HEK293 (cell line): ENCODE measurements at regions of chr2 and their contacts with region 1.

Region 1: DNA sequence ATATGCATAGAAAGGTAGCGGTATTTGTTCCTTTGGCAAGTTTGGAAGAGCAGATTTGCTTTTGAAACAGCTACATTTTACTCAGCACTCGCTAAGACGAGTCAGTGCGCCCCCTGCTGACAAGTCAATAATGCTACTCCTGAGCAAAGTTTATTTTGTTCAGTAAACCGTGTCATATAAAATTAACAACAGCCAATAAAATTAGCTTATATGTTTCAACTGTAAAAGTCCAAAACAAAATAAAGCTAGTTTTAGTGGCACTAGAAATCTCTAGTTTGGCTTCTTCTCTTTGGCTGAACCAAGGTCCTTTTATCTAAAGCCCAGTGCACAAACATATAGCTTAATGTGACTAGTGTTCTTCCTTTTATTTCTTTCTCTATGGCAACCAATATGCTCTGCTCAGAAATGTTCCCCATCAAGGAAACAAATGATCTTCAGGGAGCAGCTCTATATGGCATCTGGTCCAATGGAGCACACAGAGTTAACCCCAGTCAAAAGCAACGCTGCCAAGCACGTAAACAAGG is 4.2 kb upstream of the POU3F3 start:
- H3K4me3 ChIP-seq: no peak overlapping the region
- H3K27ac ChIP-seq: peak overlapping the region; percentile 99
- H3K4me1 ChIP-seq: peaks cover 38% of the 10 kb centered on the region
- CTCF ChIP-seq: peak; percentile 60; the same call in 1 of the 2 replicates

Region 2: GRCh38 chr2:104834431-104835153 is 15.1 kb before region 1 on chr2:
- CTCF ChIA-PET with region 1: interaction called, 22 read pairs
- POLR2A ChIA-PET with region 1: interaction called, 4 read pairs
- H3K4me3 ChIP-seq: no peak overlapping the region
- H3K27ac ChIP-seq: no peak overlapping the region
- H3K4me1 ChIP-seq: peaks cover 6% of the 10 kb centered on the region
- CTCF ChIP-seq: no peak

Region 3: GRCh38 chr2:104862058-104862941 is 12.6 kb after region 1 on chr2:
- CTCF ChIA-PET with region 1: interaction called, 15 read pairs
- POLR2A ChIA-PET with region 1: interaction called, 7 read pairs
- H3K4me3 ChIP-seq: peak overlapping the region; percentile 51
- H3K27ac ChIP-seq: peak overlapping the region; percentile 51; the same call in 1 of the 2 replicates
- H3K4me1 ChIP-seq: peaks cover 2% of the 10 kb centered on the region; the same call in 1 of the 2 replicates
- CTCF ChIP-seq: no peak

Region 4: GRCh38 chr2:104870100-104870975 is 20.7 kb after region 1 on chr2:
- CTCF ChIA-PET with region 1: interaction called, 10 read pairs
- POLR2A ChIA-PET with region 1: interaction called, 6 read pairs
- H3K4me3 ChIP-seq: no peak overlapping the region
- H3K27ac ChIP-seq: no peak overlapping the region
- H3K4me1 ChIP-seq: peaks cover 4% of the 10 kb centered on the region; the same call in 1 of the 2 replicates
- CTCF ChIP-seq: no peak

Region 5: GRCh38 chr2:104914509-104914908 is 64.8 kb after region 1 on chr2:
- CTCF ChIA-PET with region 1: no interaction called
- POLR2A ChIA-PET with region 1: no interaction called
- H3K4me3 ChIP-seq: no peak overlapping the region
- H3K27ac ChIP-seq: no peak overlapping the region
- H3K4me1 ChIP-seq: no peaks in the 10 kb centered on the region
- CTCF ChIP-seq: no peak